ENCODE measurements at regions of chr13 and their contacts with region 1.

Region 1: GRCh38 chr13:112055036-112055914 is 11.7 kb upstream of the SOX1 start:
- DNase-seq: no peak
- H3K4me3 Mint-ChIP-seq: no peak overlapping the region
- H3K27ac Mint-ChIP-seq: no peak overlapping the region
- H3K4me1 Mint-ChIP-seq: peaks cover 2% of the 10 kb centered on the region
- H3K27me3 Mint-ChIP-seq: peaks cover 75% of the 10 kb centered on the region

Region 2: GRCh38 chr13:112072531-112073244 is 17.4 kb after region 1 on chr13:
- CTCF ChIA-PET with region 1: no interaction called
- intact Hi-C with region 1: loop called (anchors 2 kb)
- DNase-seq: no peak
- H3K4me3 Mint-ChIP-seq: no peak overlapping the region
- H3K27ac Mint-ChIP-seq: no peak overlapping the region
- H3K4me1 Mint-ChIP-seq: peaks cover 10% of the 10 kb centered on the region
- H3K27me3 Mint-ChIP-seq: peaks cover 62% of the 10 kb centered on the region

Region 3: DNA sequence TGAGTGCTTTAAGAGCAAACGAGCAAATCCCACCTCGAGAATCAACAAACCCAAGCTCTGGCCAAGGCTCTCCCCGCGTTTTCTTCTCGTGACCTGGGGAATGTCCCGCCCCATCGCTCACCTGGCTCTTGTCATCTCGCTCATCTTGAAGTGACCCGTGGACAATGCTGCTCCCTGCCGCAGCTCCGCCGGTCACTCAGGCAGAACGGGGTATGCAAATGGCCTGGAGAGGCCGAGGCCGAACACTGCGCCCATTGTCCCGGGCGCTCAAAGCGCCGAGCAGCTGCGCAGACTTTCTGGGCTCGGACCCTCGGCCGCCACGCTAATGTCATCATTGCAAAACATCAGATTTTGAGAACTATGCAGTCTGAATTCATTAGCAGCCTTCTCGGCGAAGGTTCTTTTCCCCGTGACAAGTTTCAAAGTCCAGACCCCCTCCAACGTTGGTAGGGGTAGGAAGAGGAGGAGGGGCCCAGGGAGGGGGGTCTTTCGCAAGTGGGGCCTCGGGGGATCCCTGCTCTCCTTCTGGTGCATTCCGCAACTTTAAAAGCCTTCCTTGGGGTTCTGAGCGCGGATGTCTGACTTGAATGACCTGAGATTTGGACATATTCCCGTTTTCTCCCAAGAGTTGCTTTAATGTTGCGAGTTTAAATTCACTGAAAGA is 51.3 kb after region 1 on chr13:
- CTCF ChIA-PET with region 1: no interaction called
- intact Hi-C with region 1: loop called (anchors 5 kb)
- DNase-seq: no peak
- H3K4me3 Mint-ChIP-seq: no peak overlapping the region
- H3K27ac Mint-ChIP-seq: no peak overlapping the region
- H3K4me1 Mint-ChIP-seq: no peaks in the 10 kb centered on the region
- H3K27me3 Mint-ChIP-seq: peaks cover 52% of the 10 kb centered on the region